ENCODE measurements at regions of chr12 and their contacts with region 1.

Region 1: GRCh38 chr12:92505254-92506231 is 197.2 kb upstream of the PLEKHG7 start:
- DNase-seq: peak; percentile 13
- H3K4me3 Mint-ChIP-seq: peak overlapping the region; percentile 77
- H3K27ac Mint-ChIP-seq: peak overlapping the region; percentile 93
- H3K4me1 Mint-ChIP-seq: peaks cover 47% of the 10 kb centered on the region
- H3K27me3 Mint-ChIP-seq: no peaks in the 10 kb centered on the region

Region 2: GRCh38 chr12:92065018-92065499 is 440.5 kb before region 1 on chr12:
- intact Hi-C with region 1: loop called (anchors 2 kb)
- DNase-seq: peak; percentile 31
- H3K4me3 Mint-ChIP-seq: peak overlapping the region; percentile 27
- H3K27ac Mint-ChIP-seq: peak overlapping the region; percentile 69
- H3K4me1 Mint-ChIP-seq: peaks cover 55% of the 10 kb centered on the region
- H3K27me3 Mint-ChIP-seq: no peaks in the 10 kb centered on the region

Region 3: GRCh38 chr12:92218394-92219077 is 287.0 kb before region 1 on chr12:
- intact Hi-C with region 1: loop called (anchors 2 kb)
- DNase-seq: no peak
- H3K4me3 Mint-ChIP-seq: peak overlapping the region; percentile 17
- H3K27ac Mint-ChIP-seq: peak overlapping the region; percentile 59
- H3K4me1 Mint-ChIP-seq: peaks cover 21% of the 10 kb centered on the region
- H3K27me3 Mint-ChIP-seq: no peaks in the 10 kb centered on the region

Region 4: GRCh38 chr12:92516277-92516600 is 10.7 kb after region 1 on chr12:
- intact Hi-C with region 1: loop called (anchors 1 kb)
- DNase-seq: no peak
- H3K4me3 Mint-ChIP-seq: no peak overlapping the region
- H3K27ac Mint-ChIP-seq: peak overlapping the region; percentile 81
- H3K4me1 Mint-ChIP-seq: peaks cover 50% of the 10 kb centered on the region
- H3K27me3 Mint-ChIP-seq: no peaks in the 10 kb centered on the region

Region 5: DNA sequence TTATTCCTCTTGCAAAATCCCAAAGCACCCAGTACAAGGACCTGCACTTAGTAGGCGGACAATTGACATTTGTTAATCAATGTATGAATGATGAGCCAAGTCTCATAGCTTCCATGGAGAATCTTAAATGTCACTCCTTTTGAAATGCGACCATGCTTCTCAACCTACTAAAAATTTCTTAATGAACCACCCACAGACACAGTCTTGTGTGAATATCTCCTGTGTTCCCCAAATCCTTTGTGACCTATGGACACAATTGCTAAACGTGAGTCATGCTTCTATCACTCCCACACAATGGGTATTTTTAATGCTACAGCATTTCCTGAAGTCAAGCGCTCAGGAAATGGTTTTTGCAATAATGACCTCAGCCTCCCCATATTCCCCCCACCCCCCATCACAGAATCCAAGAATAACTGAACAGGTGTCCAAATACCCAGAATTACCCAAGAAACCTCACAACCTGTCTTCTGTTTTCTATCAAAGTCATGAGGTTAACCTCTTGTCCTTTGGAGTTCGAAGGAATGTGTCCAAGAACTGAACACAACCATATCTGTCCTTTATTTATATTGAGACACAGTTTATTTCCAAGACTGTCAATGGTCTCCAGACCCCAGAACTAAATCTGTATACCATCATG is 33.7 kb after region 1 on chr12:
- intact Hi-C with region 1: loop called (anchors 1 kb)
- DNase-seq: no peak
- H3K4me3 Mint-ChIP-seq: peak overlapping the region; percentile 74
- H3K27ac Mint-ChIP-seq: peak overlapping the region; percentile 97
- H3K4me1 Mint-ChIP-seq: peaks cover 81% of the 10 kb centered on the region
- H3K27me3 Mint-ChIP-seq: no peaks in the 10 kb centered on the region

Region 6: GRCh38 chr12:92593734-92594402 is 88.3 kb after region 1 on chr12:
- intact Hi-C with region 1: loop called (anchors 1 kb)
- DNase-seq: peak; percentile 79
- H3K4me3 Mint-ChIP-seq: peak overlapping the region; percentile 72
- H3K27ac Mint-ChIP-seq: peak overlapping the region; percentile 99
- H3K4me1 Mint-ChIP-seq: peaks cover 63% of the 10 kb centered on the region
- H3K27me3 Mint-ChIP-seq: no peaks in the 10 kb centered on the region